Ovary (tissue), 10 donors: ENCODE measurements at regions of chr6 and their contacts with region 1.

Region 1: DNA sequence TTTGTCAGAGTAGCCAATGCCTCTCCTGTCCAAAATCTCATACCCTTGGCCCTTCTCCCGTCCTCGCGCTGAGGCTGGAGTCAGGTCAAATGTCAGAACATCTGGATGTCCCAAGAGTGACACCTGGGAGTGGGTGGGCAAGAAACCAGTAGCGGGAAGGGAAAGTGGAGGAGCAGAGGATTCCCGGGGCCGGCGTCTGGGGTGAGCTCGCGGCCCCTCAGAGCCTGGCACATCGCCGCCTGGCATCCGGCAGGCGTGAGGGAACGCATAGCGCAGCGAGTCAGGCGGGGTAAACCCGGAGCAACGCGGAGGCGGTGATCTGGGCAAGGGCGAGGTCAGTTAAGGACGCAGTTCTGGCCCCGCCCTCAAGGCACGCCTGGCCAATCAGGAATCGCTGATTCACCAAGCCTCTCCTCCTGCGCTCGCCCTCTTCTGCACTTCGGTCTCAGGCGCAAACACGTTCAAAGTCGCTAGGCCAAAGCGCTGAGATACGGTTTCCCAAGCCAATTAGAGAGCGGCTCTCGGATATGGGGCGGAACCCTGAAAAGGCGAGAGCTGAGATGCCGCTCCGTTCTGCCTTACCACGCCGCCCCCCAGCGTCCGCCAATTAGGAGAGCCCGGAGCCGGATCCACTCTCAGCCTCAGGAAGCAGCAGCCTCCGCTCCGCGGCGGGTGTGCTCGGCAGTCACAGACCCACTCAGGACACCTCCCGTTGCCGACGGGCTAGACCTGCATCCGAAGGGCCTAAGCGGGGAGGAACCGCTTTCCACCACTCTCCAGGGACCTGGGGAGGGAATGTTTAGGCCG is 22.5 kb downstream of the VPS52 start:
- DNase-seq: peak; percentile 94 to 98 (median 97)
- H3K4me3 ChIP-seq: peak overlapping the region; percentile 62
- H3K27ac ChIP-seq: peak overlapping the region; percentile 78 to 84
- H3K4me1 ChIP-seq: peaks cover 3% of the 10 kb centered on the region
- H3K27me3 ChIP-seq: no peaks in the 10 kb centered on the region
- CTCF ChIP-seq: peak in 2 of 3 donors; percentile 9 to 21
- EP300 ChIP-seq: no peak
- POLR2A ChIP-seq: peak; percentile 79

Region 2: GRCh38 chr6:33008944-33009861 is 239.9 kb before region 1 on chr6 and contains the start of gene HLA-DOA:
- intact Hi-C with region 1: loop called in 3 of 4 experiments (anchors 5 to 10 kb)
- DNase-seq: no peak
- H3K4me3 ChIP-seq: no peak within 1 kb of the TSS
- H3K27ac ChIP-seq: no peak within 1 kb of the TSS
- H3K4me1 ChIP-seq: peaks cover 2% of the 10 kb centered on the region
- H3K27me3 ChIP-seq: no peaks in the 10 kb centered on the region
- CTCF ChIP-seq: no peak
- EP300 ChIP-seq: no peak
- POLR2A ChIP-seq: no peak
- total RNA-seq, gene HLA-DOA: 1.1 to 17.3 (median 6.4) TPM

Region 3: GRCh38 chr6:33161354-33162331 is 87.5 kb before region 1 on chr6:
- intact Hi-C with region 1: loop called (anchors 2 to 5 kb)
- DNase-seq: peak; percentile 65 to 86 (median 79)
- H3K4me3 ChIP-seq: peak overlapping the region; percentile 37
- H3K27ac ChIP-seq: no peak overlapping the region
- H3K4me1 ChIP-seq: no peaks in the 10 kb centered on the region
- H3K27me3 ChIP-seq: no peaks in the 10 kb centered on the region
- CTCF ChIP-seq: peak; percentile 85 to 97 (median 88)
- EP300 ChIP-seq: no peak
- POLR2A ChIP-seq: no peak